H1 (cell line): ENCODE measurements at regions of chr1 and their contacts with region 1.

Region 1: DNA sequence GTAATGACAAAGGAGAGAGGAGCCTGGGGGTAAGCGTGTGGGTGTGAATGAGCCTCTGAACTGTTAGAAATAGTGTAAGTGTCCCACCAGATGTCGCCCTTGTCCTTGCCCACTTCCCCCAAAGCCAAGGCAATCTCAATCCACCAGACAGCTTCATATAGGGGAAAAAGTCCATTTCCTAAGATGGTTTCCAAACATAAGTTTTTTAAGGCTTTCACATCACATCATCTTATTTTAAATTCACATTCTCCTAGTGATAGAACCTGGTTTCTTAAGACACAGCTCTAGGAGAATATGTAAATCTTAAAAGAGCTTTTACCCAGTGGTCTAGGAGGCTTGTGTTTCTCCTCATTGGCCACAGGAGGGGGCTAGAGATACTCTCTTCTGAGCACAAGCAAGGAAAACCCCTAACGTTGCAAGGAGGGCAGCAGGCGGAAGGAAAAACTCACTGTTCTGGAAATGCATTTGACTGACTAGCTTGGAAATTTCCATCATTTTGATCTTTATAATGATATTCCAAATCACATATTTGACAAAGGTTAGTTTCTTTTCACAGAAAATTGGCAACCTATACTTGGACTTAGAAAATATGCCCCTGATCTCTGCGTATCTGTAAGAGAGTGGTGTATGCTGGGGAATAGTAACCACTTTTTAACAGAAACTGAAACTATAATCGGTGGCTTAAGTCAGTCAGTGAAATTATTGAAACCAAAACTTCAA is 51.9 kb upstream of the LPAR3 start:
- DNase-seq: peak in 1 of 2 experiments; percentile 61
- H3K4me3 ChIP-seq: no peak overlapping the region
- H3K27ac ChIP-seq: no peak overlapping the region
- H3K4me1 ChIP-seq: peaks cover 0 to 2% (median 0%) of the 10 kb centered on the region in 4 experiments; a peak in 3 of 7 replicates
- H3K27me3 ChIP-seq: peaks cover 0 to 2% (median 0%) of the 10 kb centered on the region in 4 experiments; a peak in 1 of 7 replicates
- CTCF ChIP-seq: peak; percentile 63 to 86 (median 71)
- EP300 ChIP-seq: no peak
- POLR2A ChIP-seq: no peak
- RAD21 ChIP-seq: peak; percentile 72 to 74

Region 2: DNA sequence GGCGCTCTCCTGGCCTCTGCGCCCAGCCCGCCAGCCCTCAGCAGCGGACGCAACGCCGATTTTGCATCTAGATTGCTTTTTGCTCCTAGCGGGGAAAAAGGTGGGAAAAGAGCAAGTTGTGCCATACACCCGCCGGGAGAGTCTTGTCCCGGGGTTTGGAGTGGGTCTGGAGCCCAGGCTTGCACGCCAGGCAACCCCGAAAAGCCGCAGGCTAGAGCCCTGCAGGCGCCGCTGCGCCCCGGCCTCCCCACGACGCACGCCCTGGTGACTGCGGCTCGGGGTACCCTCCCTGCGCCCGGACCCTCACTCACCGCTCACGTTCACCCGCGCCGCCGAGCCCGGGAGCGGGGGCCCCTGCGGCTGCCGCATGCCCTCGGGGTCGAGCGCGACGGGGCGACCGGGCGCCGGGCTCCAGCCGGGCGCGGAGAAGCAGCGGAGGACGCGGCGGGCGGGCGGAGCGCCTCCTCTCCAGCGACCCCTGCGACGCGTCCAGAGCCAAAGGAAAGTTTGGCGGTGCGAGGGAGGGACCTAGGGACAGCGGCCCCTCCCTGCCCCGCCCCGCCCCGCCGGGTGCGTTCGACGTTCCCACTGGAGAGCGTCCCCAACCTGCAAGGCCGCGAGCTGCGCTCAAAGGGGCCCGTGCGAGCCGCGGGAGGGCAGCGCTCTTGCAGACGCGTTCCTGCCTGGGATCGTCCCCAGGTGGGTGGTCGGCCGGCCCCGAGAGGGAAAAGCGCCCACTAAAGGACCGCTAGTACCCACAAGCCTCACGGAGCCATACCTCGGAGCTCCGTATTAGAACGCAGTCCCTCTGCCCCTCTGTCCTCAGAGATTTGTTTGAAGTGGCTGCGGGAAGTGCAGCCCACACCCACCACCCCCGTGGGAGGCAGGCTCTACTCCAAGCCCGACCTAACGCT is 52.0 kb before region 1 on chr1 and contains the start of gene LPAR3:
- CTCF ChIA-PET with region 1: interaction called, 12 read pairs
- POLR2A ChIA-PET with region 1: no interaction called
- DNase-seq: peak in 1 of 2 experiments; percentile 85
- H3K4me3 ChIP-seq: peak within 1 kb of the TSS; percentile 58 to 78 (median 69)
- H3K27ac ChIP-seq: no peak within 1 kb of the TSS
- H3K4me1 ChIP-seq: peaks cover 0 to 23% (median 5%) of the 10 kb centered on the region in 4 experiments; a peak in 3 of 7 replicates
- H3K27me3 ChIP-seq: peaks cover 0 to 13% (median 7%) of the 10 kb centered on the region in 4 experiments; a peak in 5 of 7 replicates
- CTCF ChIP-seq: no peak
- EP300 ChIP-seq: no peak
- POLR2A ChIP-seq: peak in 1 of 2 experiments; percentile 57; a peak in 1 of 3 replicates
- RAD21 ChIP-seq: no peak; a peak in 1 of 4 replicates
- total RNA-seq, gene LPAR3: 25.4 and 26.8 TPM in 2 replicates

Region 3: GRCh38 chr1:84959294-84959693 is 14.4 kb after region 1 on chr1:
- CTCF ChIA-PET with region 1: interaction called, 112 read pairs
- POLR2A ChIA-PET with region 1: no interaction called
- DNase-seq: no peak
- H3K4me3 ChIP-seq: no peak overlapping the region
- H3K27ac ChIP-seq: no peak overlapping the region
- H3K4me1 ChIP-seq: no peaks in the 10 kb centered on the region
- H3K27me3 ChIP-seq: no peaks in the 10 kb centered on the region
- CTCF ChIP-seq: no peak
- EP300 ChIP-seq: no peak
- POLR2A ChIP-seq: no peak
- RAD21 ChIP-seq: no peak

Region 4: GRCh38 chr1:85027242-85027983 is 82.5 kb after region 1 on chr1:
- CTCF ChIA-PET with region 1: interaction called, 122 read pairs
- POLR2A ChIA-PET with region 1: interaction called, 4 read pairs
- DNase-seq: no peak
- H3K4me3 ChIP-seq: no peak overlapping the region
- H3K27ac ChIP-seq: no peak overlapping the region
- H3K4me1 ChIP-seq: no peaks in the 10 kb centered on the region
- H3K27me3 ChIP-seq: no peaks in the 10 kb centered on the region
- CTCF ChIP-seq: peak in 1 of 3 experiments; percentile 17; a peak in 1 of 4 replicates
- EP300 ChIP-seq: no peak
- POLR2A ChIP-seq: no peak
- RAD21 ChIP-seq: peak; percentile 10 to 31; a peak in 2 of 4 replicates

Region 5: GRCh38 chr1:85048296-85049064 is 103.6 kb after region 1 on chr1 and contains the start of gene MCOLN3:
- CTCF ChIA-PET with region 1: interaction called, 21 read pairs
- POLR2A ChIA-PET with region 1: interaction called, 5 read pairs
- DNase-seq: peak in 1 of 2 experiments; percentile 75
- H3K4me3 ChIP-seq: peak within 1 kb of the TSS; percentile 41 to 64 (median 50)
- H3K27ac ChIP-seq: no peak within 1 kb of the TSS
- H3K4me1 ChIP-seq: peaks cover 0 to 14% (median under 1%) of the 10 kb centered on the region in 4 experiments; a peak in 4 of 7 replicates
- H3K27me3 ChIP-seq: peaks cover 19 to 41% (median 36%) of the 10 kb centered on the region in 4 experiments
- CTCF ChIP-seq: no peak
- EP300 ChIP-seq: 0 out of 3 replicates have a peak, but pooled peaks of 1 of the 2 experiments have one; percentile 3
- POLR2A ChIP-seq: no peak
- RAD21 ChIP-seq: no peak
- total RNA-seq, gene MCOLN3: 2.9 and 3.8 TPM in 2 replicates

Region 6: DNA sequence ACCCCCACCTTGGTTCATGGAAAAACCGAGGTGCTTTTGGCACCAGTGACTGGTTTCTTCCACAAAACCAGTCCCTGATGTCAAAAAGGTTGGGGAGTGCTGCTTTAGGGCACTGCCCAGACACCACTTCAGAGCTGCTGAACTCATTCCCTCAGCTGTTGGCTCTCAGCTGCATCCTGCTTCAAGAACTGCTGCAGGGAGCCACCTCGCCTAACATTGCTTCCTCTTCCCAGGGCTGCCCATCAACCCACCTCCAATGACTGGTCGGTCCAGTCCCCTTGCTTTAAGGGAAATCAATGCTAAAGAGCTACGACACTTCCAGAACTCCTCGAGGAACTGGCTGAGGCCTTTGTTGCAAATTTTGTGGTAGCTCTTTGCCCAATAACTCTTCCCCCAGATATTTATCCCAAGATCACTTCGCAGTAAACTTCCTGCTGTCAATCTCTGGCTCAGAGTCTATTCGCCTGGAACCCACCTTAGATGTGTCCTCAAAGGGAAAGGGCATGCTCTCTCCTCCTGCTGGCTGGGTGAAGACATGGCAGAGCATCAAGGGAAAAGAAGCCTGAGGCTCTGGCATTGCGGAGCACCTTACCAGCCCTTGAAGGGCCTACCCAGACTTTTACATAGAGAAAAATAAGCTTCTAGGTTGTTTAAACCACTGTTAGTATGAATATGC is 285.5 kb after region 1 on chr1:
- CTCF ChIA-PET with region 1: interaction called, 11 read pairs
- POLR2A ChIA-PET with region 1: no interaction called
- DNase-seq: no peak
- H3K4me3 ChIP-seq: no peak overlapping the region
- H3K27ac ChIP-seq: no peak overlapping the region
- H3K4me1 ChIP-seq: peaks cover 0 to 5% (median 2%) of the 10 kb centered on the region in 4 experiments; a peak in 4 of 7 replicates
- H3K27me3 ChIP-seq: no peaks in the 10 kb centered on the region
- CTCF ChIP-seq: peak; percentile 45 to 61 (median 60)
- EP300 ChIP-seq: no peak
- POLR2A ChIP-seq: no peak
- RAD21 ChIP-seq: peak; percentile 52 to 69